WTC11 (cell line): ENCODE measurements at regions of chr2 and their contacts with region 1.

Region 1: GRCh38 chr2:20650880-20651730 is at the start of gene HS1BP3:
- DNase-seq: peak; percentile 77
- ATAC-seq: peak; percentile 93
- H3K4me3 Mint-ChIP-seq: peak within 1 kb of the TSS; percentile 83
- H3K27ac Mint-ChIP-seq: peak within 1 kb of the TSS; percentile 69; the same call in 1 of the 2 replicates
- H3K4me1 Mint-ChIP-seq: peaks cover 31% of the 10 kb centered on the region
- H3K27me3 Mint-ChIP-seq: peaks cover 17% of the 10 kb centered on the region
- CTCF ChIP-seq: peak; percentile 88
- total RNA-seq, gene HS1BP3: 17.9 to 20.1 TPM (median 19.8 TPM) in 3 replicates

Region 2: DNA sequence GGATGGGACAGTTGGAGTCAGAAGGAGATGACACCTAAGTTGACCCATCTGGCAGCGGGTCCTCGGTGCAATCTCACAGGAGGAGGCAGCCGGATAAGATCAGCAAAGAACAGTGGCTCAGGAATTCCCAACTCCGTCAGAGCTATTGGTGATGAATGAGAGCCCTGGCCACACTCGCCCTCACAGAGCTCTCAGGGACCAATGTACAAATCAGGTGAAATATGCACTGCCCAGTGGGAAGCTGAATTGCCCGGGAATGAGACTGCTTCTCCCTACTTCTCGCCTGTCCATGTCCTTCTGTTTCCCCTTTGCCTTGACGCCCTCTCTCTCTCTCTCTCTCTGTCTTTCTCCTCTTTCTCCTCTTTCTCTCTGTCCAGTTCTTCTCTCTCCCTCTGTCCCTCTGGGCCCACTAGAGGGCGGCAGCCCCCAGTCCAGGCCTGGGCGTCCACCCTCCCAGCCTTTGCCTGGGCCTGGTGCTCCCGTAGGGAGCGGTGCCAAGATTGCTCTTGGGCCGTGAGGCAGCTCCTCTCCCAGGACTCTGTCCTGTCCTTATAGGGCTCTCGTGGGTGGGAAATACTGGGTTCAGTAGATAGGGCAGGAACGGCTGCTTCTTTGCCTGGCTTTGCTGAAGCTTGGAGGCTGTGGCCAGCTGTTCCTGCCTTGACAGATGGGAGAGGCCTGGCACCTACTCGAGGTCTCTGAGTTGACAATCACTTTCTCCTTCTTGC is 272.1 kb before region 1 on chr2:
- CTCF ChIA-PET with region 1: interaction called, 13 read pairs
- POLR2A ChIA-PET with region 1: no interaction called
- DNase-seq: peak; percentile 81
- ATAC-seq: peak; percentile 97
- H3K4me3 Mint-ChIP-seq: no peak overlapping the region
- H3K27ac Mint-ChIP-seq: no peak overlapping the region
- H3K4me1 Mint-ChIP-seq: peaks cover 27% of the 10 kb centered on the region
- H3K27me3 Mint-ChIP-seq: peaks cover 4% of the 10 kb centered on the region; the same call in 1 of the 2 replicates
- CTCF ChIP-seq: peak; percentile 64

Region 3: GRCh38 chr2:20424300-20425290 is 226.5 kb before region 1 on chr2:
- CTCF ChIA-PET with region 1: interaction called, 21 read pairs
- POLR2A ChIA-PET with region 1: no interaction called
- DNase-seq: no peak
- ATAC-seq: no peak
- H3K4me3 Mint-ChIP-seq: no peak overlapping the region
- H3K27ac Mint-ChIP-seq: no peak overlapping the region
- H3K4me1 Mint-ChIP-seq: peaks cover 9% of the 10 kb centered on the region
- H3K27me3 Mint-ChIP-seq: no peaks in the 10 kb centered on the region
- CTCF ChIP-seq: no peak

Region 4: GRCh38 chr2:20635675-20636584 is 15.2 kb before region 1 on chr2:
- CTCF ChIA-PET with region 1: interaction called, 29 read pairs
- POLR2A ChIA-PET with region 1: no interaction called
- DNase-seq: peak; percentile 93
- ATAC-seq: peak; percentile 96
- H3K4me3 Mint-ChIP-seq: no peak overlapping the region
- H3K27ac Mint-ChIP-seq: no peak overlapping the region
- H3K4me1 Mint-ChIP-seq: peaks cover 33% of the 10 kb centered on the region
- H3K27me3 Mint-ChIP-seq: no peaks in the 10 kb centered on the region
- CTCF ChIP-seq: peak; percentile 75

Region 5: DNA sequence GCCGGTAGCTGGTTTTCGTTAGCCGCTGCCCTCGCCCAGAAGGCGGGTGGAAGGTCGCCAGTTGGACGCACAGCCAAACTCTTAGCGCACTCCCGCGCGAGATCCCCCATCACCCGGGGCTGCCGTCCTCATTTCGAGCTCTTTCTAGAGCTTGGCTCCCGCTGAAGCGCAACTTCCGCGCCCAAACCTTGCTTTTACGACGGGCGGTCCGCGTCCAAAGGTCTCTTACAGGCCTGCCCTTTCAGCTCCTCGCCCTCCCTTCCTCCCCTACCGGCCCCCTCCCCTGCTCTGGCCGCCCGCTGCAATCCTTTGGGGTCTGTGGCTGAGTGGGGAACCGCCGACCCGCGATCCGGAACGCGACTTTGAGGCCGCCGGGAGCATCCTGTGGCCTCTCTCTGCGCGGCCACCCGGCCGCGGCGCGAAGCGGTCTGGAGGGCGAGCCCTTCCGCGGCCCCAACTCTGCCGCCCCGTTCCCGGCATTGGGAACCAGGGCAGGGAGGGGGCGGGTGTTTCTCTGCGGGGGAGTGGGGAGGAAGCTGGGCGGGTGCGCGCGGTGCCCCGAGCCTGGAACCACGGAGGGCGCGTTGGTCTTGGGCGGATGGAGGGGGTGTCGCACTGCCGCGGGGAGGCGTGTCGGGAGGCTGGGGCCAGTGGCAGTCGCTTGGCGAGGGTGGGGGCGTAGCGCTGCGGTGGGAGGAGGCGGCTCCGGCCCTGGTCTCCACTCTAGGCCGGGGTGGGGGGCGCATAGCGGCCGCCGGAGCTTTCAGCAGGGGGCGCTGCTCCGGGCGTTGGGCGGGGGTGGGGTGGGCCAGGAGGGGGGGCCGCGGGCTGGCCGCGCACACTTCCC is 15.4 kb after region 1 on chr2 and contains the start of gene GDF7:
- CTCF ChIA-PET with region 1: interaction called, 77 read pairs
- POLR2A ChIA-PET with region 1: interaction called, 8 read pairs
- DNase-seq: peak; percentile 72
- ATAC-seq: peak; percentile 35
- H3K4me3 Mint-ChIP-seq: peak within 1 kb of the TSS; percentile 76
- H3K27ac Mint-ChIP-seq: no peak within 1 kb of the TSS
- H3K4me1 Mint-ChIP-seq: peaks cover 38% of the 10 kb centered on the region
- H3K27me3 Mint-ChIP-seq: peaks cover 96% of the 10 kb centered on the region
- CTCF ChIP-seq: peak; percentile 31; the same call in 1 of the 2 replicates
- total RNA-seq, gene GDF7: 0.18 to 0.55 TPM (median 0.23 TPM) in 3 replicates

Region 6: GRCh38 chr2:20698916-20699613 is 48.0 kb after region 1 on chr2:
- CTCF ChIA-PET with region 1: no interaction called
- POLR2A ChIA-PET with region 1: no interaction called
- DNase-seq: no peak
- ATAC-seq: no peak
- H3K4me3 Mint-ChIP-seq: no peak overlapping the region
- H3K27ac Mint-ChIP-seq: no peak overlapping the region
- H3K4me1 Mint-ChIP-seq: peaks cover 4% of the 10 kb centered on the region; the same call in 1 of the 2 replicates
- H3K27me3 Mint-ChIP-seq: no peaks in the 10 kb centered on the region
- CTCF ChIP-seq: no peak

Region 7: GRCh38 chr2:20723543-20723942 is 72.4 kb after region 1 on chr2:
- CTCF ChIA-PET with region 1: no interaction called
- POLR2A ChIA-PET with region 1: no interaction called
- DNase-seq: no peak
- ATAC-seq: no peak
- H3K4me3 Mint-ChIP-seq: no peak overlapping the region
- H3K27ac Mint-ChIP-seq: no peak overlapping the region
- H3K4me1 Mint-ChIP-seq: no peaks in the 10 kb centered on the region; the same call in 1 of the 2 replicates
- H3K27me3 Mint-ChIP-seq: no peaks in the 10 kb centered on the region
- CTCF ChIP-seq: no peak

Region 8: GRCh38 chr2:20962939-20963557 is 311.9 kb after region 1 on chr2:
- CTCF ChIA-PET with region 1: interaction called, 10 read pairs
- POLR2A ChIA-PET with region 1: no interaction called
- DNase-seq: peak; percentile 87
- ATAC-seq: peak; percentile 87
- H3K4me3 Mint-ChIP-seq: no peak overlapping the region
- H3K27ac Mint-ChIP-seq: no peak overlapping the region
- H3K4me1 Mint-ChIP-seq: no peaks in the 10 kb centered on the region
- H3K27me3 Mint-ChIP-seq: no peaks in the 10 kb centered on the region; the same call in 1 of the 2 replicates
- CTCF ChIP-seq: peak; percentile 82